ENCODE measurements at regions of chr20 and their contacts with region 1.

Region 1: DNA sequence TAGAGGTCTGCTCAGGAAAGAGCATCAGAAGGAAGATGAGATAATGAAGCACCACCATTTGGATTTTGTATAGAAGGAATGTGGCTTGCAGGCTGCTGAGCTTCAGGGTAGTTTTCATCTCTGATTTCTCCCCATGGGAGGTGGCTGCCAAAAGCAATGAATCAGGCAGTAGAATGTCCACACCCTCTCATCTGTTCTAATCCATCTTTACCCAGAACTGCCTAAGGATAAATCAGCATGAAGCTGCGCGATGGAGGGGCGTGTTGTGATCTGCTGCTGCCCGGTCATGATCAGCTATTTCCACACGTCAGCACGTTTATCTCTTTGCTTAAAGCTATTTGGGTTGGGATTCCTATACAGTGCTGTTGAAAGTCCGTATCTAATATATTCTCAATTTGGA is 295.4 kb downstream of the FOXA2 start:
- DNase-seq: no peak
- H3K4me3 ChIP-seq: no peak overlapping the region
- H3K27ac ChIP-seq: no peak overlapping the region
- H3K4me1 ChIP-seq: no peaks in the 10 kb centered on the region
- H3K27me3 ChIP-seq: no peaks in the 10 kb centered on the region
- CTCF ChIP-seq: no peak
- EP300 ChIP-seq: no peak
- POLR2A ChIP-seq: no peak

Region 2: GRCh38 chr20:22180244-22180643 is 108.7 kb before region 1 on chr20:
- in situ Hi-C with region 1: loop called in 1 of 4 experiments (anchors 25 kb)
- intact Hi-C with region 1: no loop called
- DNase-seq: no peak
- H3K4me3 ChIP-seq: no peak overlapping the region
- H3K27ac ChIP-seq: no peak overlapping the region
- H3K4me1 ChIP-seq: no peaks in the 10 kb centered on the region
- H3K27me3 ChIP-seq: no peaks in the 10 kb centered on the region
- CTCF ChIP-seq: no peak
- EP300 ChIP-seq: no peak
- POLR2A ChIP-seq: no peak

Region 3: DNA sequence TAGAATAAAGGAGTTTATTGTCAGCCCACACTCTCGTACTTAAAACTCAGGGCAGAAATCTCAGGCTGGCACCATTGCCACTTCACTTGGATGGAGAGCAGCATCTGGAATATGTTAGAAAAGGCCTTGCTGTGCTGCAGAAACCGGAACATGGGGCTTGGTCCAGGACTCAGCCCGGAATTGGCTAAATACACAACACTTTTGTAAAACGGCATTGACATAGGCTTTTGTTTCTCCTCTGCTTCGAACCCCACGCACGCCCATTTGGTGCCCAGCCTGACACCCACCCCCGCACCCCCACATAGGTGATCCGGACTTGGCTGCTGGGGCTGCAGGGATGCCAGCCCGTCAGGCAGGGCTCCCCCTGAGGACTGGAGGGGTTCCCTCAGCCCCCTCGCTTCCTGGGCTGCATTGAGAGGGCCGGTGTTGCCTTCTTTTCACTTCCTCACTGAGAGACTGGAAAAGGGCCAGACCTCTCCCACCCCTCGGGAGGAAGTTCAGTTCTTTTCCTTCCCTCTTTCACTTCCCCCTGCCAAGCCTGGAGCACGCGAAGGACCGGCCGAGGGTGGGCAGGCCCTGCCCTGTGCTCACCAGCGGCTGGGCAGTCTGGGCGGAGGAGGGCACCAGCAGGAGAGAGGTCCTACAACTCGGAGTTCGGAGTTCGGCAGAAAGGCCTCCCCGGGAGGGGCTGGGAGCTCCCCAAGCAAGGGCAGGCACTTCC is 1366.7 kb after region 1 on chr20:
- in situ Hi-C with region 1: no loop called
- intact Hi-C with region 1: no loop called
- DNase-seq: peak; percentile 36
- H3K4me3 ChIP-seq: no peak overlapping the region
- H3K27ac ChIP-seq: peak overlapping the region; percentile 31 to 67 (median 48)
- H3K4me1 ChIP-seq: peaks cover 0 to 14% (median 5%) of the 10 kb centered on the region in 4 donors
- H3K27me3 ChIP-seq: no peaks in the 10 kb centered on the region
- CTCF ChIP-seq: no peak
- EP300 ChIP-seq: no peak
- POLR2A ChIP-seq: no peak